Left ventricle myocardium superior (tissue), 1 donor: ENCODE measurements at regions of chr2 and their contacts with region 1.

Region 1: DNA sequence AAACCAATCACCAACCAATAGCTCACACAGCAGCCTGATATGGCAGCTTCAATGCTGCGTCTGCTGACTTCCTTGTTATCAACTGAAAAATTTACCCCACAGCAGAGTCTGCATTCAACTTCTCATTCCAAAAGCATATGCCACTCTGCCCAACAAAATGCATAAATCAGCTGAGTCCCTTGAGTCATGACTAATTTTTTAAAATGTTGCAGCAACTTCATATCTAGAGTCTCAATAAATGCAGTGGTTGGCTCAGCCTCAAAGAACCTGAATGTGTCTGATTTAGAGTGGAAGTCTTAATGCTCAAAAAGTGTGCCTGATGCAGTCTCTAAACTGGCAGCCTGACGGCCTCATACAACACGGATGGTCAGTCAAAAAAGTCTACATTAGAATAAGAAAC is 46.5 kb downstream of the FARSB start:
- DNase-seq: no peak
- ATAC-seq: no peak

Region 2: GRCh38 chr2:222049946-222050345 is 559.4 kb before region 1 on chr2:
- intact Hi-C with region 1: loop called (anchors 10 kb)
- DNase-seq: no peak
- ATAC-seq: no peak